ENCODE measurements at regions of chr2 and their contacts with region 1.

Region 1: GRCh38 chr2:8681786-8682692 is at the start of gene ID2:
- DNase-seq: peak; percentile 100
- ATAC-seq: peak; percentile 69
- H3K4me3 Mint-ChIP-seq: peak within 1 kb of the TSS; percentile 99
- H3K27ac Mint-ChIP-seq: peak within 1 kb of the TSS; percentile 98
- H3K4me1 Mint-ChIP-seq: peaks cover 34% of the 10 kb centered on the region
- H3K27me3 Mint-ChIP-seq: peaks cover 12% of the 10 kb centered on the region
- total RNA-seq, gene ID2: 167 to 172 TPM

Region 2: GRCh38 chr2:7450188-7450832 is 1231.7 kb before region 1 on chr2:
- POLR2A ChIA-PET with region 1: interaction called, 22 read pairs
- DNase-seq: no peak
- ATAC-seq: peak; percentile 45
- H3K4me3 Mint-ChIP-seq: peak overlapping the region; percentile 73
- H3K27ac Mint-ChIP-seq: peak overlapping the region; percentile 92
- H3K4me1 Mint-ChIP-seq: peaks cover 70% of the 10 kb centered on the region
- H3K27me3 Mint-ChIP-seq: no peaks in the 10 kb centered on the region

Region 3: DNA sequence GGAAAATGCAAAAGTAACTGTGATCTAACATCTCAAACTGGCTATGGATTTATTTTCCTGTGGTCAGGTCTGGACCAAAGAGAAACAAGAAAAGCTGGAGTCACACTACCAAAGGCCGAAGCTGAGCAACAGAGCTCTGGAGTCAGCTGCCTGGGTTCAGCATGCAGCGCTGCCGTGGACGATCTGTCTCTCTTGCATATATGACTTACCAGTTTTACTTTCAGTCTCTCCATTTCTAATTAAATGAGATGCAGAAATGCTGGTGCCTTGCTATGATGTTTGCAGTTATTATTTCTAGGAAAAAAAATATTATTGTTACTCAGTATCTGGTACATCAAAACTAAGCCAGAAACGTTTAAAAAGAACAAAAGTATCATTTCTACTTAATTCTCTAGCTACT is 951.6 kb before region 1 on chr2:
- POLR2A ChIA-PET with region 1: interaction called, 98 read pairs
- DNase-seq: no peak
- ATAC-seq: peak; percentile 16
- H3K4me3 Mint-ChIP-seq: peak overlapping the region; percentile 95
- H3K27ac Mint-ChIP-seq: peak overlapping the region; percentile 92
- H3K4me1 Mint-ChIP-seq: peaks cover 50% of the 10 kb centered on the region
- H3K27me3 Mint-ChIP-seq: no peaks in the 10 kb centered on the region

Region 4: DNA sequence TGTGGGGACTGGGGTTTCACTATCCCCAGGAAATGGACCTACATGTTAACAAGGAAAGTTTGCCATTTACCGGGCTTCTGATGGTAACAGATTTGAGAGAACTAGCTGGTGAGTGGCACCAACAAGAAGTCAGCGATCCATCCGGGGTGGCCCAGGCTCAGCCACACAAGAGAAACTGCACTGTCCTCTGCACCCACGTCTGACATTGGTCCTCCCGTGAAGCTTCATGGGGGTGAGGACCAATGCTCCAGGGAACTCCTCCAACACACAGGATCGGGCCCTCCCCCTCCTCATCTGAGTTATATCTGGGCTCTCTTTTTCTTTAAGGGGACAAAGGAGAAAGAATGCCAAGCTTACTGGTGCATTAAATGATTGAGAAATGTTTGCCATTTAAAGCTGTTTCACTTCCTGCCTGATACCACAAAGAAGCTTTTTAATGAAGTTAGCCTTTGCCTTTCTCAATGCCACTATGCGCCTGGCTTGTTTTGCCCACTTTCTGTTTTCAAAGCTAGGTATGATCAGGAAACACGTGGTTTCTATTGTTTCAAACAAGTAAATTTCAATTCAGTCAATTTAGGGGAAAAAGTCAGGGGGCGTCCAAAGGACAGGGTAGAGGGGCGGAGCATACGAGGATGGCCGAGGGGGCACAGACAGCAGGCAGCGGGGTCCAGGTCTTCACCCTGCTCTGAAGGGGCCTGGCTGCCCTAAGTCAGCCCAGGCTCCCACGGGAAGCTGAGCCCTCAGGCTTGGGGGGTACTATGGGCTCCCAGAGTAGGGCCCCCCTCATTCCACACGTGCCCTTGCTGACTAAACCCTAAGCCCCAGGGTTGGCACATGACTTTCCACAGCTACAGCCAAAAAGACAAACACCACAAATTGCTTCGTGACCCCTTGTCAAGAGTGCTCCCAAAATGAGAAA is 204.2 kb before region 1 on chr2:
- POLR2A ChIA-PET with region 1: interaction called, 26 read pairs
- DNase-seq: no peak
- ATAC-seq: peak; percentile 25
- H3K4me3 Mint-ChIP-seq: peak overlapping the region; percentile 60
- H3K27ac Mint-ChIP-seq: peak overlapping the region; percentile 88
- H3K4me1 Mint-ChIP-seq: peaks cover 89% of the 10 kb centered on the region
- H3K27me3 Mint-ChIP-seq: no peaks in the 10 kb centered on the region

Region 5: GRCh38 chr2:8544786-8545694 is 137.0 kb before region 1 on chr2:
- POLR2A ChIA-PET with region 1: interaction called, 122 read pairs
- DNase-seq: peak; percentile 86
- ATAC-seq: peak; percentile 93
- H3K4me3 Mint-ChIP-seq: peak overlapping the region; percentile 35
- H3K27ac Mint-ChIP-seq: peak overlapping the region; percentile 97
- H3K4me1 Mint-ChIP-seq: peaks cover 79% of the 10 kb centered on the region
- H3K27me3 Mint-ChIP-seq: no peaks in the 10 kb centered on the region

Region 6: DNA sequence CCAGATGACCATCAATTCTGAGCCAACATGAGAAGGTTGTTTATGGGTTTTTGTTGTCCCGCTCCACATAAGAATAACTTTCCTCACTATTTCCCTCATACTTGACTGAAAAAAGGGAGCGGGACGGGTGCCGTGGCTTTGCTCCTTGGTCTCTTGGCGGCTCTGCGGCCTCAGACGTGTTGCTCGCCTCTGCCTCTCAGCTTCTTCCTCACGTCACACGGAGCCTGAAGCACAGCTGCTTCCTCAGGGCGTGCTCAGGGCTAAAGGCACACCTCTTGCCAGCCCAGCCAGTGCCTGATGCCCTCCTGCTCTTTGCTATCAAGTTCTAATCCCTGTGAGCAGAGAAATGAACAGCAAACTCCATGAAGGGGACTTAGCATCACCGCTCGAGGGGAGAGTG is 18.0 kb before region 1 on chr2:
- POLR2A ChIA-PET with region 1: interaction called, 13 read pairs
- DNase-seq: no peak
- ATAC-seq: peak; percentile 56
- H3K4me3 Mint-ChIP-seq: peak overlapping the region; percentile 28
- H3K27ac Mint-ChIP-seq: peak overlapping the region; percentile 22
- H3K4me1 Mint-ChIP-seq: peaks cover 29% of the 10 kb centered on the region
- H3K27me3 Mint-ChIP-seq: peaks cover 15% of the 10 kb centered on the region

Measured in activated naive CD8-positive, alpha-beta T cell treated with anti-CD3 and anti-CD28 coated beads, Interleukin-2, amount 10 ng/mL, durations not matched to agents 7 days and 5 days (primary cell).